ENCODE measurements at regions of chr16 and their contacts with region 1.

Region 1: GRCh38 chr16:84526794-84527503 is 22.5 kb upstream of the MEAK7 start:
- DNase-seq: no peak
- ATAC-seq: peak; percentile 10; the same call in 2 of the 3 replicates
- H3K4me3 ChIP-seq: no peak overlapping the region
- H3K27ac ChIP-seq: no peak overlapping the region
- H3K4me1 ChIP-seq: peaks cover 2 to 20% of the 10 kb centered on the region in 2 experiments; a peak in 3 of 5 replicates
- H3K27me3 ChIP-seq: peaks cover 0 to 3% of the 10 kb centered on the region in 2 experiments; a peak in 2 of 5 replicates
- CTCF ChIP-seq: no peak
- EP300 ChIP-seq: no peak
- POLR2A ChIP-seq: no peak
- RAD21 ChIP-seq: no peak

Region 2: GRCh38 chr16:84537491-84538151 is 10.7 kb after region 1 on chr16:
- CTCF ChIA-PET with region 1: no interaction called
- POLR2A ChIA-PET with region 1: interaction called, 11 read pairs
- in situ Hi-C with region 1: no loop called
- intact Hi-C with region 1: no loop called
- DNase-seq: peak; percentile 48 to 93 (median 68)
- ATAC-seq: peak; percentile 81
- H3K4me3 ChIP-seq: peak overlapping the region; percentile 0; the same call in 1 of the 2 replicates
- H3K27ac ChIP-seq: peak overlapping the region; percentile 86
- H3K4me1 ChIP-seq: peaks cover 27 to 63% of the 10 kb centered on the region in 2 experiments
- H3K27me3 ChIP-seq: no peaks in the 10 kb centered on the region
- CTCF ChIP-seq: no peak
- EP300 ChIP-seq: peak; percentile 97
- POLR2A ChIP-seq: no peak
- RAD21 ChIP-seq: peak; percentile 14 to 21; a peak in 1 of 4 replicates